ENCODE measurements at regions of chr22 and their contacts with region 1.

Region 1: GRCh38 chr22:40856513-40857308 is at the starts of genes ST13 and XPNPEP3:
- DNase-seq: peak; percentile 95 to 99 (median 97)
- ATAC-seq: peak; percentile 88 to 89
- H3K4me3 Mint-ChIP-seq: peak within 1 kb of the TSS; percentile 97 to 100 (median 99)
- H3K27ac Mint-ChIP-seq: peak within 1 kb of the TSS; percentile 98 to 100 (median 100)
- H3K4me1 Mint-ChIP-seq: peaks cover 9 to 69% (median 63%) of the 10 kb centered on the region in 4 donors
- H3K27me3 Mint-ChIP-seq: no peaks in the 10 kb centered on the region
- polyA plus RNA-seq, gene ST13: 244 to 283 (median 260) TPM
- polyA plus RNA-seq, gene XPNPEP3: 5.9 to 11.5 (median 7.1) TPM

Region 2: GRCh38 chr22:40791241-40791640 is 65.5 kb before region 1 on chr22:
- POLR2A ChIA-PET with region 1: no interaction called
- DNase-seq: no peak
- ATAC-seq: no peak
- H3K4me3 Mint-ChIP-seq: no peak overlapping the region
- H3K27ac Mint-ChIP-seq: peak overlapping the region in 1 of 10 donors; percentile 2
- H3K4me1 Mint-ChIP-seq: peaks cover 0 to 2% (median 0%) of the 10 kb centered on the region in 4 donors
- H3K27me3 Mint-ChIP-seq: no peaks in the 10 kb centered on the region

Region 3: GRCh38 chr22:40818747-40819598 is 37.7 kb before region 1 on chr22 and contains the start of gene SLC25A17:
- POLR2A ChIA-PET with region 1: interaction called, 22 read pairs
- DNase-seq: peak; percentile 76 to 92 (median 84)
- ATAC-seq: peak; percentile 92 to 94
- H3K4me3 Mint-ChIP-seq: peak within 1 kb of the TSS; percentile 82 to 99 (median 96)
- H3K27ac Mint-ChIP-seq: peak within 1 kb of the TSS; percentile 76 to 96 (median 94)
- H3K4me1 Mint-ChIP-seq: peaks cover 18 to 42% (median 28%) of the 10 kb centered on the region in 4 donors
- H3K27me3 Mint-ChIP-seq: no peaks in the 10 kb centered on the region
- polyA plus RNA-seq, gene SLC25A17: 17.3 to 19.0 (median 17.5) TPM

Region 4: GRCh38 chr22:40829131-40829530 is 27.6 kb before region 1 on chr22:
- POLR2A ChIA-PET with region 1: no interaction called
- DNase-seq: no peak
- ATAC-seq: no peak
- H3K4me3 Mint-ChIP-seq: no peak overlapping the region
- H3K27ac Mint-ChIP-seq: peak overlapping the region in 1 of 10 donors; percentile 55
- H3K4me1 Mint-ChIP-seq: peaks cover 0 to 2% (median 0%) of the 10 kb centered on the region in 4 donors
- H3K27me3 Mint-ChIP-seq: no peaks in the 10 kb centered on the region